ENCODE measurements at regions of chr14 and their contacts with region 1.

Region 1: GRCh38 chr14:34227834-34228649 is 234.0 kb downstream of the SPTSSA start:
- DNase-seq: peak; percentile 80
- H3K4me3 ChIP-seq: no peak overlapping the region
- H3K27ac ChIP-seq: peak overlapping the region; percentile 43
- H3K4me1 ChIP-seq: peaks cover 9% of the 10 kb centered on the region
- H3K27me3 ChIP-seq: no peaks in the 10 kb centered on the region
- CTCF ChIP-seq: peak; percentile 65

Region 2: DNA sequence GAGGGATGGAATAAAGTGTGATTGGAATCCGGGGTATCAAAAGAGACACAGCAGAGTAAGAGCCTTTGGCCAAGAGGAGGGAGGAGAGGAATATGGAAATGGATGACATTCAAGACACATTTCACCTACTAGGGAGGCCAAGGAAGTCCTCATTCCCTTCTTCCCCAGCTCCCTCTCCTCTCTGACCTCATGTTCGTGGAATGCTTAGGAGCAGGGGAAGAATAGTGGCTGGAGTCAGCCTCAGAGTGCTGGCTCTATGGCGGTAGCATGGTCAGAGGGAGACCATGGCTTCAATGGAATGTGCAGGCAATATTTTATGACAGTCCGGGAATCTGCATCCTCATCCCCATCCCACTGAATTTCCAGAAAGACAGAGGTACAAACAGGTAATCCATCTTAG is 473.8 kb before region 1 on chr14:
- intact Hi-C with region 1: no loop called
- DNase-seq: no peak
- H3K4me3 ChIP-seq: no peak overlapping the region
- H3K27ac ChIP-seq: no peak overlapping the region
- H3K4me1 ChIP-seq: no peaks in the 10 kb centered on the region
- H3K27me3 ChIP-seq: no peaks in the 10 kb centered on the region
- CTCF ChIP-seq: no peak

Region 3: DNA sequence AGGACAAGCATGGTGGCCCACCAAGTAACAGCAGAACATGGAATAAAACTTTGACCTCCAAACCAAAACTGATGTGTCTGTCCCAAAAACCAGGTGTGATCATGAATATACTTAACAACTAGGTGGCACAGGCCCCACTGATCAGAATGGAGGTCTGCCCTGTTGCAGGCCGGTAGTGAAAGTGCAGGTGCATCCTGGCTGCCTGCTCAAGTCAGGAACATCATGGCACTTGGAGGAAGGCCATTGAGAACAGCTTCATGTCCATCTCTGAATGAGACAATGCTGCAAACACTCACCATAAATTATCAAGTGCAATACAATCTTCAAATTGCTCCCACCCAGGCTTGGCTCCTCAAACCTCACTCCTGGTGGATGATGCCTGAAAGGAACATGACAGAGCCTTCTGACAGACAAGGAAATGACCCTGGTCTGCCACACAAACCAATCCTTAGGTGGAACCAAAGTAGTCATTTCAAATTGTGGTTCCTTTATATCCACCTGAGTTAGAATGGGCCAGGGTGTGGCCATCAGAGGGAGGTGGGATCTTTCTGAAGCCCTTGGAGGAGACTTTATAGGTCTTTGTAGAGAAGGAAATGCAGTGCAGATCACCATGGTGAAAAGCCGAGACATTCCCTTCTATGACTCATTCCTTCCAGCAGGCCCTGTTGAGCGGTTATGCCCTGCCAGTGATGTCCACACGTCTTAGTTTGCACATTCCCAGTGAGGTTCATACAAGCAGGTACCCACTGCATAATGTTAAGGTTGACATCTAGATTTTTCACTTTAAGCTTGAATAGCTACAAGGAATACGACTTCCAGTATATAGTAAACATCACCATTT is 313.1 kb before region 1 on chr14:
- intact Hi-C with region 1: no loop called
- DNase-seq: no peak
- H3K4me3 ChIP-seq: no peak overlapping the region
- H3K27ac ChIP-seq: no peak overlapping the region
- H3K4me1 ChIP-seq: no peaks in the 10 kb centered on the region
- H3K27me3 ChIP-seq: no peaks in the 10 kb centered on the region
- CTCF ChIP-seq: no peak

Region 4: DNA sequence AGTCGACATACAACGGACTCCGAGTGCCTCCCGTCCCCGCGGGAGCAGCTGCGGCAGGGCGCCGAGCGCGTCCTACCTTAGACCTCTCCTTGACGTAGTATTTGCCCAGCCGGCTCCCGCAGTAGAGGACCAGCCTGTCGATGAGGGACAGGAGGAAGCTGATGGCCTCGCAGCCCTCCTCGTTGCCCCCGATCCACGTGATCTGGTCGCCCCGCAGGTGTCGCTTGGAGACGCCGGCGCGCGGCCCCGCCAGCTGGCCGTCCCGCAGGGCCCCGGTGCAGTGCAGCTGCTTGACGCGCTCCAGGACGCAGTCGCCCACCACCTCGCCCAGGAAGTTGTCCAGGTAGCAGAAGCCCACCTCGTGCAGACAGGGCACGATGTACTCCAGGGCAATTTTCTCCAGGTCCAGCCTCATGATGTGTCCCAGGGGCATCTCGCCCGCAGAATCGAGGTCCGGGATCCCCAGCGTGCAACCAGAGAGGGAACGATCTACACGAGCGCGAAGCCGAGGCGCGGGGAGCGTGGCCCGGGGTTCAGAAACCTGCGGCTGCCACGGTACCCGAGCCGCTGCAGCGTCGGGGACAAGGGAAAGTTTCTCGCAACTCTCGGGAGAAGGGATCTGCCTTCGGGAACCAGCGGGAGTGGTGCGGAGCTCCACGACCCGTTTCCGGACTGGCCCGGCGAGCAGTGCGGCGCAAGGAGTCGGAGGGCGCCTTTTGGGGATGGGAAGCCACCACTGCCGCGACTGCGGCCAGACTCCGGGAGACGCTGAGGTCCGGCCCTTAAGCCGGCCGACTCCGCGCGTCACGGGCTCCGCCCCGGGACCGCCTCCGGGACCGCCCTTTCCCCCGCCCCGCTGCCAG is 277.5 kb before region 1 on chr14 and contains the start of gene EGLN3:
- intact Hi-C with region 1: loop called (anchors 10 kb)
- DNase-seq: peak; percentile 95
- H3K4me3 ChIP-seq: peak within 1 kb of the TSS; percentile 59
- H3K27ac ChIP-seq: peak within 1 kb of the TSS; percentile 58
- H3K4me1 ChIP-seq: peaks cover 3% of the 10 kb centered on the region
- H3K27me3 ChIP-seq: no peaks in the 10 kb centered on the region
- CTCF ChIP-seq: no peak
- total RNA-seq, gene EGLN3: 86.3 to 292 TPM

Region 5: DNA sequence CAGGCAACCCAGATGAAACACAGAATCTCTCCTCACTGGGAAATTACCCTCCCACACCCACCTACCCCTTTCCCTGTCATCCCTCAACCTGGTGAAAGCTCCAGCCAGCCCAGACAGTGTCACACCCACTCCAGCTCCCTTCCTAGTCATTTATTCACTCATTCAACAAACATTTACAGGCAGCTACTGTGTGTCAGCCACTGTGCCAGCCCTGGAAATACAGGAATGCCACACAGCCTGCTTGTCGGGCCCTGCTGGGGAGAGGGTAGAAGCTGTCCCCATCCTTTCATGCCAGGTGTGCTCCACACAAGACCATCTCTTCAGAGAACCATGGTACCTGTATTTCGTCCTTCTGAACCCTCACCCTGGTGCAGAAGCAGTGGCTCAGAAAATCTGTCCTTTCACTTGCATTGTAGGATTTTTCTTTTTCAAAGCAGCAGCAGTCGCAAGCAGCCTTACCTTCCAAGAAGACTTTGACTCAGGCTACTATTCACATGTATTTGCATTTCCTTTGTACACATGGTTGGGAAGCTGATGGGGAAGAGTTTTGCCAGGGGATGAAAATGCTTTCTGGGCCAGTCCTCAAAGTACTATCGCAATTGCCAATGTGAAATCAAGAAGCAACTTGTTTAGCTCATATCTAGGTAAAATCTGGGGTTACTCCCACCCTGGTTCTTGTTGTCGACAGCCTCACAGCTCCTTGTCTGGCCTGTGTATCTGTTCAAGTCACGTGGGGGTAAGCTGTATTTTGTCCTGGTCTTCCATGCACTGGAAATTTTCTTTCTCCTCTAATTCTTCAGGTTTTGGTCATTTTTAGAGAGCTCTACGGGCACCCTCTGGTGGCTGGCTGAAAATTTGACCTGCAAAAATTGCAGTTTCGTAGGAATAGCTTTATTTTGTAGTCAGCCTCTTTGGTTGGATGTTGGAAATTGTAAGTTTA is 129.7 kb before region 1 on chr14:
- intact Hi-C with region 1: loop called (anchors 10 kb)
- DNase-seq: peak; percentile 48
- H3K4me3 ChIP-seq: no peak overlapping the region
- H3K27ac ChIP-seq: no peak overlapping the region
- H3K4me1 ChIP-seq: peaks cover 4% of the 10 kb centered on the region
- H3K27me3 ChIP-seq: no peaks in the 10 kb centered on the region
- CTCF ChIP-seq: peak; percentile 35

Region 6: DNA sequence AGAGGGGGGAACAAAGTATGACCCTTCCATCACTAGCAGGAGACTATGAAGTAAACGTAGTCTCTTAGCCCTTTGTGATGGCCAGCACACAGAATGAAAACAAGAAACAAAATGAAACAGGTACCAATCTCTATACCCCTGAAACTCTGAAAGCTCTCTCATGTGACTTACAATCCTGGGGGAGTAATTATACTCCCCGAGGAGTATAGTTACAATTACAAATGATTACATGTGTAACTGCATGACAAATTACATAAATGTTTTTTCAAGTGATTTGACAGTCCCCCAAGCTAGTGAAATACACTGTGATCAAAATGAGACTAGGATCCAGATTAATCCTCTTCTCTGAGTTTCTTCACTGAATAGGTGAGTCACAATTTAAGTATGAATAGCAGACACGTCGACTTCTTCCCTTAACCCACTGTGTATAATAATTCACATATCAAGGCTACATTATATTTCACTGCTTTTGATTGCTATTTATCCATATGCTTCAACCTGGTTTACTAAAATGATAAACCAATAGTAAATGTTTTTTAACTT is 160.0 kb after region 1 on chr14:
- intact Hi-C with region 1: no loop called
- DNase-seq: no peak
- H3K4me3 ChIP-seq: no peak overlapping the region
- H3K27ac ChIP-seq: no peak overlapping the region
- H3K4me1 ChIP-seq: no peaks in the 10 kb centered on the region
- H3K27me3 ChIP-seq: no peaks in the 10 kb centered on the region
- CTCF ChIP-seq: no peak

Measured in colonic mucosa (tissue), 4 donors.